Common myeloid progenitor, CD34-positive (primary cell): ENCODE measurements at regions of chr16 and their contacts with region 1.

Region 1: GRCh38 chr16:106623-107324 is 28.7 kb downstream of the MPG start:
- DNase-seq: peak; percentile 76 to 88 (median 85)
- H3K4me3 ChIP-seq: no peak overlapping the region
- H3K27ac ChIP-seq: no peak overlapping the region
- H3K4me1 ChIP-seq: peaks cover 0 to 16% (median 7%) of the 10 kb centered on the region in 4 experiments
- H3K27me3 ChIP-seq: no peaks in the 10 kb centered on the region

Region 2: DNA sequence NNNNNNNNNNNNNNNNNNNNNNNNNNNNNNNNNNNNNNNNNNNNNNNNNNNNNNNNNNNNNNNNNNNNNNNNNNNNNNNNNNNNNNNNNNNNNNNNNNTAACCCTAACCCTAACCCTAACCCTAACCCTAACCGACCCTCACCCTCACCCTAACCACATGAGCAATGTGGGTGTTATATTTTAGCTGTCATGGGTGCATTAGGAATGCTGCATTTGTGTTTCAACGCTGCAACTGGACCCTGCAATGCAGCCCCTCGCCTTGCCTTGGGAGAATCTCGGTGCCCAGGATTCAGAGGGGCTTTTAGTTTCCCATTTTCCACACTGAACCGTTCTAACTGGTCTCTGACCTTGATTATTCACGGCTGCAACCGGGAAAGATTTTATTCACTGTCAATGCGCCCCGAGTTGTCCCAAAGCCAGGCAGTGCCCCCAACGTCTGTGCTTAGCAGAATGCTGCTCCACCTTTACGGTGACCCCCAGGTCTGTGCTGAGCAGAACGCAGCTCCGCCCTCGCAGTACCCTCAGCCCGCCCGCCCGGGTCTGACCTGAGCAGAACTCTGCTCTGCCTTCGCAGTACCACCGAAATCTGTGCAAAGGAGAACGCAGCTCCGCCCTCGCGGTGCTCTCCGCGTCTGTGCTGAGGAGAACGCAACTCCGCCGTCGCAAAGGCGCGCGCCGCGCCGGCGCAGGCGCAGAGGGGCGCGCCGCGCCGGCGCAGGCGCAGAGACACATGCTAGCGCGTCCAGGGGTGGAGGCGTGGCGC is 96.7 kb before region 1 on chr16:
- CTCF ChIA-PET with region 1: no interaction called
- POLR2A ChIA-PET with region 1: no interaction called
- DNase-seq: peak in 2 of 3 donors; percentile 55 to 60
- H3K4me3 ChIP-seq: peak overlapping the region in 2 of 7 experiments; percentile 7 to 19
- H3K27ac ChIP-seq: no peak overlapping the region
- H3K4me1 ChIP-seq: peaks cover 0 to 3% (median 0%) of the 10 kb centered on the region in 4 experiments
- H3K27me3 ChIP-seq: no peaks in the 10 kb centered on the region

Region 3: DNA sequence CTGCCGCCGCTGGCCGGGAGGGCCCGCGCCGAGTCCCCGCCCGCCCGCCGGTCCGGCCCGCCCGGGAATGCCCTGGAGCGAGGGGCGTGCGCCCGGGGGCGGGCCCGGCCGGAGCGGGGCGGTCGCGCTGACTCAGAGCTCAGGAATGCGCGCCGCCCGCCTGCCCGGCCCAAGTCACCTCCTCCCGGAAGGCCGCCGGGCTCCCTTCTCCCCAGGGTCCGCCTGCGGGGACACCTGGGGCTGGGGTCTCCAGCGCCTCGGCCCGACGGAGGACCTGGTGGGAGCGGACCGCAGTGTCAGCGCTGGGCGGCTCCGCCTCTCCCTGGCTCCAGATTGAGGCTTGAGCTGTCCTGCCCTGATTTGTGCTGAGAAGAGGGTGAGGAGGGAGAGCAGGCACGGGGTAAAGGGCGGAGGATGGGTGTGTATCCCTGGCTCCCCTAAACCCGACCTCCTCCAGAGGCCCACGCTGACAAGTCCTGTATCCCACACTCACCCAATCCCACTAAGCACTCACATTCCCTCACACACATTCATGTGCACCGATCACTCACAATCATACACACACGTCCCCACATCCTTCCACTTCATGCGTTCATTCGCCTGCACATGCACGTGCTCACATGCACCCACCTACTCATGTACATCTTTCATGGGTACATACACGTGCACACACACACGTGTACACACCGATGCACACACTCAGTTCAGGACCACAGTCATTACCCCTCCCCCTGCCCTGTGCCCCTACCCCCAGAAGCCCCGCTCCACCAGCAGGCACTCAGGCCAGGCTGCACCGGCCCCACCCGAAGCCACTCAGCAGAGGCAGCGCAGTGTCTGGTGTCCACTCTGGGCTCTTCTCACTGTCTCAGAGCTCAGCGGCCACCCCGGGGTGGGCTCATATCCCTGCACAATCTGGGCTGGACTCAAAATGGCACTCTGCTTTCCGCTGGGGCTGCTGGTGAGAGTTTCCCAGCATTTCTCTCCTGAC is 33.9 kb before region 1 on chr16 and contains the start of gene RHBDF1:
- CTCF ChIA-PET with region 1: interaction called, 46 read pairs
- POLR2A ChIA-PET with region 1: no interaction called
- DNase-seq: peak in 1 of 3 donors; percentile 30
- H3K4me3 ChIP-seq: peak within 1 kb of the TSS in 6 of 7 experiments; percentile 42 to 66 (median 57)
- H3K27ac ChIP-seq: no peak within 1 kb of the TSS
- H3K4me1 ChIP-seq: peaks cover 3 to 57% (median 51%) of the 10 kb centered on the region in 4 experiments
- H3K27me3 ChIP-seq: peaks cover 0 to 22% (median 2%) of the 10 kb centered on the region in 5 experiments

Region 4: DNA sequence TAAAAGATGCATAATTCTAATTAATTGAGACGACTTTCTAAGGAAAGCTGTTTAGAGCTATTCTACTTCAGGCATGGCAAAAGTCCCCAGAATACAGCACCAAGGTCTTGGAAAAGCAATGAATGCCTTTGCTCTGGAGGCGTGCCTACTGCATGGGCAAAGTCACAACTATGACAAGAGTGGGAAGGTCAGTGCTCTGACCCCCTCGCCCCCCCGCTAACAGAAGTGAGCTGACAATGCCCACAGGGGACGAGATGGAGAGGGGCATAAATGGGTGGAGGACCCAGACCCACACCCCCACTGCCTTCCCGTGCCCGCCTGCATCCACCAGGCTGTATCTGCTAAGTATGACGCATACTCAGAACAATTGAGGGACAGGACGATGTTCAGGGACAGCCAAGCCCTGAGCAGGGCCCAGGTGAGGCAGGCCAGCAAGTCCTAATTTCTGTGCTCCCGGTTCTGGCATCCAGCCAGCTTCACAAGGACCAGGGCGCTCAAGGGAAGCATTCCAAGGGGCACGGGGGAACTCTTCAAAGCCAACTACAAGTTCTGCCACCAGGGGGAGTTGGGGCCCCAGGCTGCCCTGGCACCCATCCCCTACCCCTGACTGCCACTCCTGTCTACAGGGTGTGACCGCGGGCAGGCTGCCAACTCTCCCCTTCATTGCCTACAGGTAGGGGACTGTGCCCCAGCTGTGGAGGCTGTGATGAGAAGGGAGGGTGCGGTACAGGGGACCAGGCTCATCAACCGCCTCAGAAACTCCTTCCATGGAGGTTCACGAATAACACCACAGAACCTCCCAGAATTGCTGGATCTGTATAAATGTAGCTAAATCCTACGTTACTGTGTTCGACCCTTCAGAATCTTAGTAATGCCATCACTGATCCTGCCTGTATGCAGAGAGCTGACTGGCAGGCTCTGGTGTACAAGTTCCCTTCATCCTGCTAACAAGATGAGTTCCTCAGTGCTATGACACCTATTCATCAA is 10.9 kb after region 1 on chr16:
- CTCF ChIA-PET with region 1: interaction called, 54 read pairs
- POLR2A ChIA-PET with region 1: no interaction called
- DNase-seq: peak; percentile 72 to 77 (median 73)
- H3K4me3 ChIP-seq: no peak overlapping the region
- H3K27ac ChIP-seq: no peak overlapping the region
- H3K4me1 ChIP-seq: peaks cover 0 to 16% (median 12%) of the 10 kb centered on the region in 4 experiments
- H3K27me3 ChIP-seq: no peaks in the 10 kb centered on the region

Region 5: DNA sequence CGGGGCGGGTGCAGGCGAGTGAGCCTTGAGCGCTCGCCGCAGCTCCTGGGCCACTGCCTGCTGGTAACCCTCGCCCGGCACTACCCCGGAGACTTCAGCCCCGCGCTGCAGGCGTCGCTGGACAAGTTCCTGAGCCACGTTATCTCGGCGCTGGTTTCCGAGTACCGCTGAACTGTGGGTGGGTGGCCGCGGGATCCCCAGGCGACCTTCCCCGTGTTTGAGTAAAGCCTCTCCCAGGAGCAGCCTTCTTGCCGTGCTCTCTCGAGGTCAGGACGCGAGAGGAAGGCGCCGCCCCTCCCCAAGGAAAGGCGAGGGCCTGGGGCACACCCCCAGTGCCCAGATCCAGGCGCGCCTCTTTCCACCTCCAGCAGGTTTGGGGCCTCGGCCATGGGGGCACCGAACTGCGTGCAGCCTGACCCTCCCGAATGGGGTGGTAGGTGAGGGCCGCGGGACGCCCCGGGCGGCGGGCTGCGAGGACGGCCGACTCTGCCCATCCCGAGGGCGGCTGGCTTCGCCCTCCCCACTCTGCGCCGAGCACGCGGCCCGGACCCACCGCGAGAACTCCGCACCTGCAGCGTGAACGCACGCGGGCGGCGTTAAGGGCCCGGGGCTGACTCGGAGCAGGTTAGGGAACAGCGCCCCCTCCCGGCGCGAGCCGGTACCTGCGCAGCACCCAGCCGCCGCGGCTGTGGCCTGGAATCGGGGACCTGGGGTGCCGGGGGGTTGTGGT is 74.3 kb after region 1 on chr16:
- CTCF ChIA-PET with region 1: interaction called, 30 read pairs
- POLR2A ChIA-PET with region 1: no interaction called
- DNase-seq: peak; percentile 75 to 88 (median 86)
- H3K4me3 ChIP-seq: peak overlapping the region in 4 of 7 experiments; percentile 28 to 63 (median 48)
- H3K27ac ChIP-seq: no peak overlapping the region
- H3K4me1 ChIP-seq: peaks cover 0 to 20% (median 15%) of the 10 kb centered on the region in 4 experiments
- H3K27me3 ChIP-seq: peaks cover 0 to 36% (median 11%) of the 10 kb centered on the region in 5 experiments